ENCODE measurements at regions of chr12 and their contacts with region 1.

Region 1: DNA sequence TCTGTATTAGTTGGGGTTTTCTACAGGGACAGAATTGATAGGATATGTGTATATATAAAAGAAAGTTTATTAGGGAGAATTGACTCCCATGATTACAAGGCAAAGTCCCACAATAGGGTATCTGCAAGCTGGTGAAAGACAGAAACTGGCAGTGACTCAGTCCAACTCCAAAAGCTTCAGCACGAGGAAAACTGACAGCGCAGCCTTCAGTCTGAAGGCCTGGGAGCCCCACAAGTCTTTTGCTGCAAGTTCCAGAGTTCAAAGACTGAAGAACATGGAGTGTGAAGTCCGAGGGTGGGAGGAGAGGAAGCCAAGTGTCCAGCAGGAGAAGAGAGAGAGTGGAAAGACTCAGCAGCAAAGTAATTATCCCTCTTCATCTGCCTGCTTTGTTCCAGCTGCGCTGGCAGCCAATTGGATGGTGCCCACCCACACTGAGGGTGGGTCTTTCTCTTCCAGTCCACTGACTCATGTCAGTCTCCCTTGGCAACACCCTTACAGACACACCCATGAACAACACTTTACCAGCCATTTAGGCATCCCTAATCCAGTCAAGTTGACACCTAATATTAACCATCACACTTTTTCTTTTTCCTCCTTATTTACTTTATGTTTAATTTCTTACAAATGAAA is 110.6 kb upstream of the SCAF11 start:
- DNase-seq: no peak
- ATAC-seq: no peak
- H3K4me3 ChIP-seq: no peak overlapping the region
- H3K27ac ChIP-seq: no peak overlapping the region
- H3K4me1 ChIP-seq: peaks cover 11% of the 10 kb centered on the region
- H3K27me3 ChIP-seq: no peaks in the 10 kb centered on the region
- CTCF ChIP-seq: no peak
- EP300 ChIP-seq: no peak
- POLR2A ChIP-seq: no peak
- RAD21 ChIP-seq: no peak

Region 2: GRCh38 chr12:46160101-46160980 is 59.4 kb after region 1 on chr12:
- CTCF ChIA-PET with region 1: no interaction called
- POLR2A ChIA-PET with region 1: no interaction called
- in situ Hi-C with region 1: no loop called
- intact Hi-C with region 1: no loop called
- DNase-seq: no peak
- ATAC-seq: no peak
- H3K4me3 ChIP-seq: no peak overlapping the region
- H3K27ac ChIP-seq: no peak overlapping the region
- H3K4me1 ChIP-seq: no peaks in the 10 kb centered on the region
- H3K27me3 ChIP-seq: peaks cover 0 to 4% of the 10 kb centered on the region in 2 experiments; a peak in 1 of 5 replicates
- CTCF ChIP-seq: no peak
- EP300 ChIP-seq: no peak
- POLR2A ChIP-seq: no peak
- RAD21 ChIP-seq: no peak

Region 3: DNA sequence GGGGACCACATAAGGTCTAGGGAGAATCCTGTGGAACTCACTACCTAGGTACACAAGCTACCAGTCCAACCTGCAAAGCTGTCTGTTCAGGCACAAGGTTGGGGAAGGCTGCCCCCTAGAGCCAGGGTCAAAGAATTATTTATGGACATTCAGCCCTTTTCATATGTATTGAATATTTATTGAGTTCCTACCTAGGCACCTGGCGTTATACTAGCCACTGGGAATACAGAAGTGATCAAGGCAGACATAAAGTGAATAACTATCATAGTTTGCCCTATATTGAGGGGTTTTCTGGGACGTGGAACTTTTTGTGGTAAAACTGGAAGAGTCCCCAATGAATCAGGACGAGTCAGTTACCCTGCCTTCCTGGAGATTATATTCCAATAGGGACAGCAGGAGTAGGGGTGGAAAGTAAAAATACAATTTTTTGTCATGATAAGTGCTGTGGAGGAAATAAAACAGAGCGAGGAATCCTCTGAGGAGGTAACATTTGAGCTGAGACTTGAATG is 1666.3 kb after region 1 on chr12:
- CTCF ChIA-PET with region 1: no interaction called
- POLR2A ChIA-PET with region 1: no interaction called
- in situ Hi-C with region 1: no loop called
- intact Hi-C with region 1: loop called (anchors 5 kb)
- DNase-seq: peak; percentile 53
- ATAC-seq: peak; percentile 39
- H3K4me3 ChIP-seq: no peak overlapping the region
- H3K27ac ChIP-seq: no peak overlapping the region
- H3K4me1 ChIP-seq: peaks cover 39% of the 10 kb centered on the region
- H3K27me3 ChIP-seq: peaks cover 4 to 19% of the 10 kb centered on the region in 2 experiments; a peak in 3 of 5 replicates
- CTCF ChIP-seq: peak; percentile 68
- EP300 ChIP-seq: no peak
- POLR2A ChIP-seq: no peak
- RAD21 ChIP-seq: no peak

Measured in HepG2 (cell line).